ENCODE measurements at regions of chr2 and their contacts with region 1.

Region 1: DNA sequence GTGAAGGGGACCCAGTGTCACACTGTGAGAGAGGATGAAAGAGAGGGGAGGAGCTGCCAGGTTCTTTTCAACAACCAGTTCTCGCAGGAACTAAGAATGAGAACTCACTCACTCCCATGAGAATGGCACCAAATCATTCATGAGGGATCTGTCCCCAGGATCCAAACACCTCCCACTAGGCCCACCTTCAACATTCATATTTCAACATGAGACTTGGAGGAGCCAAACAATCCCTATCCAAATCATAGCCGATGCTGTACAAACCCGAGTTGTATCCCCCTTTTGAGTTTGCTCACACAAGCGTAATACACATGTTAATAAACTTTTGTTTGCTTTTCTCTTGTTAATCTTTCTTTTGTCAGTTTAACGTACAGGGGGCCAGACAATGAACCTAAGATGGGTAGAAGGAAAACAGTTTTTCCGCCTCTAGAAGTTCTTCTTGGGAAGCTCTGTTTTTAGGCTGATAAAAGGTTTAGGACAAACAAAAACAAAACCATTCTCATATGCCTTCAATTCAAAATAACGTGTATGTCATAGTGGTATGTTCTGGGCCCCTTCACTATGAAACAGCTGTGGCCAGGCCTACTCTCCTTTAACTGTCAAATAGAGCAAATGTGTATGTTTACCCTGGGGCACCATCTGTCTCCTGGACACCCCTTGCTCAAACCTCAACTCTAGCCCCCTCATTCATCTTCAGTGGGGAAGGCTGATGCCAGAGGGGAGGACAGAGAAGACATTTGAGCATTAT is 9.1 kb upstream of the TMEM37 start:
- DNase-seq: no peak
- H3K4me3 ChIP-seq: no peak overlapping the region
- H3K27ac ChIP-seq: no peak overlapping the region
- H3K4me1 ChIP-seq: no peaks in the 10 kb centered on the region
- H3K27me3 ChIP-seq: no peaks in the 10 kb centered on the region
- CTCF ChIP-seq: no peak

Region 2: DNA sequence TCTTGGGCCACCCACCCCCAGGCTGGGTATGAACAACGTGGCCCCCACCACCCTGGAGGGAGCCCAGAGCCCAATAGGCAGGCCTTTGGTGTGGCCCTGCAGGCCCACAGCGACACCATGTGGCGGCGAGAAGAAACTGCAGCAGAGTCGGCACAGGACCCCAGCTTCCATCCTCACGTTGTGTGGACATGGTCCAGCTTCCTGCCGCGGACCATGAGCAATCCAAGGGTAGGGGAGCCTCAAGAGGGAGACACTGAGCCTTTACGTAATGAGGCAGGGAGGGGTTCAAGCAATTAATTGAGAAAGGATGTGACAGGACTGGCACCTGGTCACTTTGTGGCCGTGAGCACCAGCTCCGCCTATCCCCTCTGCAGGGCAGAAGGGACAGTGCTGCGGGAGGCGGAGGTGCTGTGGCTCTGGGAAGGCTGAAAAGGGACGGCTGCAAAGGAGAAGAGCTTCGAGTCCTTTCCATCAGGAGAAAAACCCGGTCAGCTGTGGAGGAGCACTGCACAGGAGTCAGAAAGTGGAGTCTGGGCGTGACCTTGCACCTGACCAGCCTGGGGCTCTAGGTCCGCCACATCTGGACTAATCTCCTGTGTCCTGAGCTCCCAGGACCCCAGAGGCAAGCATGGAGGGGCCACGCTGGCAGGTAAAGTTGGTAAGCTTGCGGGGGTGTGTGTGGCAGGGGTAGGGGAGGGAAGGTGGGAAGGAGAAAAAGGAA is 53.9 kb after region 1 on chr2:
- intact Hi-C with region 1: loop called (anchors 5 kb)
- DNase-seq: peak; percentile 49
- H3K4me3 ChIP-seq: no peak overlapping the region
- H3K27ac ChIP-seq: no peak overlapping the region
- H3K4me1 ChIP-seq: no peaks in the 10 kb centered on the region
- H3K27me3 ChIP-seq: no peaks in the 10 kb centered on the region
- CTCF ChIP-seq: peak; percentile 97